Heart left ventricle (tissue), 16 donors: ENCODE measurements at regions of chr17 and their contacts with region 1.

Region 1: GRCh38 chr17:50487213-50488096 is 8.8 kb downstream of the RSAD1 start:
- DNase-seq: peak in 1 of 5 donors; percentile 16
- ATAC-seq: no peak
- H3K4me3 ChIP-seq: no peak overlapping the region
- H3K27ac ChIP-seq: no peak overlapping the region
- H3K4me1 ChIP-seq: peaks cover 0 to 11% (median 7%) of the 10 kb centered on the region in 12 donors
- H3K27me3 ChIP-seq: no peaks in the 10 kb centered on the region
- CTCF ChIP-seq: no peak
- POLR2A ChIP-seq: no peak

Region 2: DNA sequence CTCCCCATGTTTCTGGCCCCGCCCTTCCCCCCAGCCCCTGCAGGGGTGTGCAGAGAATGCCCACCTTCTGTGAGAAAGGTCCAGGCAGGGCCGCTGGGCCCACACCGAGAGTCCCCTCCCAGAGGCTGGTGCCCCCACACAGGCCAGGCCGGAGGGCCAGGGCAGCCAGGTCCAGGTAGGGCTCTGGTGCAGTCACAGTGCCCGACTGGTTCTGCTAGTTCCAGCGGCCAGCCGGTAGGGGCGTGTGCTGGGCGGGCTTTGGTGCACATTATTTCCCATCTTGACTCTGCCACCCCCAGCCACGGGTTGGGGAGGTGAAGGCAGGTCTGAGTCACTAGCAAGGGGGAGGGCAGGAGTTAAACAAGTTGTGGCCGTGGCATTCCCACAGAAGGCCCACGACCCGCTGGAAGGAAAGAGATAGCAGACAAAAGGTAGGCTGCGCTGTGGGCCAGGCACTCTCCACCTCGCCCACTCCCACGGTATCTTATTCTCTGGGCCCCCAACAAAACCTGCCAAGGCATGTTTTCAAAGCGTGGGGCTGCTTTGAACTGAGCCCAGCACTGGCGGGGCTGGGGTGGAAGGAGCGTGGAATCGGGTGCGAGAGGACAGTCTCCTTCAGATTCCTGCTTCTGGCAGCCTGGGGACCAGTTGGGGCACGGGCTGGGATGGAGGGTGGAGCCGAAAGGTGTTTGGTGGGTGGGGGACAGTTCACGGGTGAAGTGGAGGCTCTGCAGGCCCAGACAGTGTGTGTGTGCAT is 46.9 kb after region 1 on chr17:
- intact Hi-C with region 1: loop called in 3 of 10 experiments (anchors 1 to 5 kb)
- DNase-seq: no peak
- ATAC-seq: peak; percentile 45 to 75 (median 60)
- H3K4me3 ChIP-seq: peak overlapping the region in 11 of 12 donors; percentile 16 to 72 (median 51)
- H3K27ac ChIP-seq: peak overlapping the region; percentile 16 to 94 (median 76)
- H3K4me1 ChIP-seq: peaks cover 0 to 41% (median 10%) of the 10 kb centered on the region in 12 donors
- H3K27me3 ChIP-seq: peaks cover 0 to 40% (median 22%) of the 10 kb centered on the region in 9 donors
- CTCF ChIP-seq: peak in 8 of 12 donors; percentile 8 to 42 (median 28)
- POLR2A ChIP-seq: no peak

Region 3: DNA sequence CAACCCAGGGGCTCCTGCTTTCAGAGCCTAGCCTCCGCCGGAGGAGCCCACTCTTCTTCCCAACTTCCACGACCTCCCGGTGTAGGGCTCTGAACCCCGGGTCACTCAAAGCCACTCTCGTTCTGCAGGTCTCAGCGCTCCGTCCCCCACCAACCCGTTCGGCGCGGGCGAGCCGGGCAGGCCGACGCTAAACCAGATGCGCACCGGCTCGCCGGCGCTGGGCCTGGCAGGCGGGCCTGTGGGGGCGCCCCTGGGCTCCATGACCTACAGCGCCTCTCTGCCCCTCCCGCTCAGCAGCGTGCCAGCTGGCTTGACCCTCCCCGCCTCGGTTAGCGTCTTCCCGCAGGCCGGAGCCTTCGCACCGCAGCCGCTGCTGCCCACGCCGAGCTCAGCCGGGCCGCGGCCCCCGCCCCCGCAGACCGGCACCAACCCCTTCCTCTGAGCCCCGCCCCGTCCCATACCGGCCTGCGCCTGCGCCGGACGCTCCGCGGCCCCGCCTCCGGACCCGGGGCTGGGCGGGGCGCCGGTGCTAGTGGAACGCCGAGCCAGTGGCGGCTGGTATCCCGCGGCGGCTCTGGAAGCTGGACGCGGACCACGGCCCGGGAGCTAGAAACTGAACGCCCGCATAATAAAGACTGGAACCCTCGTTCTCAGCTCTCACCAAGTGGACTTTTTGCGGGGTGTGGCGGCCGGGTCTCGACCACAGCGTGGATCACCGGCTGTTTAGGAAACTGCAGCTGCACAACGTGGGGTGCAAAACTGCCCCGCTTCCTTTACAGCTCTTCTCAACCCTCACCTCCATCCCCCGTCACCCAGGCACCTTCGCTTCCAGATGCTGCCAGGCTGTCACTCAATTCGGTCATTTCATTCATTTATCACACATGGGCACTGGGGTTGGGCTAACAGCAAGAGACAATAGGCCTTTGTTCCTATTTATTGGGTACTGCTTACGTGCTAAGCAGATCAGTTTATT is 54.5 kb after region 1 on chr17:
- intact Hi-C with region 1: loop called in 7 of 10 experiments (anchors 2 to 5 kb)
- DNase-seq: peak; percentile 88 to 96 (median 89)
- ATAC-seq: peak; percentile 65 to 93 (median 90)
- H3K4me3 ChIP-seq: peak overlapping the region; percentile 27 to 86 (median 64)
- H3K27ac ChIP-seq: peak overlapping the region in 11 of 12 donors; percentile 56 to 89 (median 82)
- H3K4me1 ChIP-seq: peaks cover 0 to 42% (median 21%) of the 10 kb centered on the region in 12 donors
- H3K27me3 ChIP-seq: peaks cover 0 to 2% (median 0%) of the 10 kb centered on the region in 9 donors
- CTCF ChIP-seq: peak in 6 of 12 donors; percentile 12 to 50 (median 33)
- POLR2A ChIP-seq: peak in 1 of 2 donors; percentile 86

Region 4: DNA sequence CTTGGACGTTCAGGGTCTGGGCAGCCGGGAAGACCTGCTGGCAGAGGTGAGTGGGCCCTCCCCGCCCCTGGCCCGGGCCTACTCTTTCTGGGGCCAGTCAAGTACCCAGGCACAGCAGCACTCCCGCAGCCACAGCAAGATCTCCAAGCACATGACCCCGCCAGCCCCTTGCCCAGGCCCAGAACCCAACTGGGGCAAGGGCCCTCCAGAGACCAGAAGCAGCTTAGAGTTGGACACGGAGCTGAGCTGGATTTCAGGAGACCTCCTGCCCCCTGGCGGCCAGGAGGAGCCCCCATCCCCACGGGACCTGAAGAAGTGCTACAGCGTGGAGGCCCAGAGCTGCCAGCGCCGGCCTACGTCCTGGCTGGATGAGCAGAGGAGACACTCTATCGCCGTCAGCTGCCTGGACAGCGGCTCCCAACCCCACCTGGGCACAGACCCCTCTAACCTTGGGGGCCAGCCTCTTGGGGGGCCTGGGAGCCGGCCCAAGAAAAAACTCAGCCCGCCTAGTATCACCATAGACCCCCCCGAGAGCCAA is 138.7 kb after region 1 on chr17:
- intact Hi-C with region 1: loop called in 9 of 10 experiments (anchors 1 to 10 kb)
- DNase-seq: peak; percentile 71 to 82 (median 77)
- ATAC-seq: peak; percentile 48 to 86 (median 82)
- H3K4me3 ChIP-seq: no peak overlapping the region
- H3K27ac ChIP-seq: no peak overlapping the region
- H3K4me1 ChIP-seq: peaks cover 0 to 19% (median 4%) of the 10 kb centered on the region in 12 donors
- H3K27me3 ChIP-seq: peaks cover 0 to 39% (median 9%) of the 10 kb centered on the region in 9 donors
- CTCF ChIP-seq: peak; percentile 74 to 88 (median 80)
- POLR2A ChIP-seq: no peak